Panc1 (cell line): ENCODE measurements at regions of chr12 and their contacts with region 1.

Region 1: GRCh38 chr12:93569656-93570551 is 2.6 kb upstream of the SOCS2 start:
- DNase-seq: no peak
- ATAC-seq: peak; percentile 75
- H3K4me3 ChIP-seq: peak overlapping the region; percentile 71 to 96
- H3K27ac ChIP-seq: peak overlapping the region; percentile 78
- H3K4me1 ChIP-seq: peaks cover 16% of the 10 kb centered on the region
- H3K27me3 ChIP-seq: no peaks in the 10 kb centered on the region
- CTCF ChIP-seq: peak; percentile 93

Region 2: GRCh38 chr12:93742110-93742934 is 172.4 kb after region 1 on chr12:
- CTCF ChIA-PET with region 1: interaction called, 3 read pairs
- POLR2A ChIA-PET with region 1: interaction called, 3 read pairs
- in situ Hi-C with region 1: no loop called
- intact Hi-C with region 1: loop called (anchors 5 kb)
- DNase-seq: peak; percentile 38
- ATAC-seq: peak; percentile 99
- H3K4me3 ChIP-seq: peak overlapping the region; percentile 73 to 74
- H3K27ac ChIP-seq: peak overlapping the region; percentile 93
- H3K4me1 ChIP-seq: peaks cover 11% of the 10 kb centered on the region
- H3K27me3 ChIP-seq: no peaks in the 10 kb centered on the region
- CTCF ChIP-seq: peak; percentile 84

Region 3: GRCh38 chr12:95385246-95386035 is 1815.5 kb after region 1 on chr12:
- CTCF ChIA-PET with region 1: no interaction called
- POLR2A ChIA-PET with region 1: interaction called, 12 read pairs
- in situ Hi-C with region 1: no loop called
- intact Hi-C with region 1: no loop called
- DNase-seq: no peak
- ATAC-seq: no peak
- H3K4me3 ChIP-seq: no peak overlapping the region
- H3K27ac ChIP-seq: no peak overlapping the region
- H3K4me1 ChIP-seq: no peaks in the 10 kb centered on the region
- H3K27me3 ChIP-seq: peaks cover 3% of the 10 kb centered on the region; the same call in 1 of the 2 replicates
- CTCF ChIP-seq: no peak